WTC11 (cell line): ENCODE measurements at regions of chr3 and their contacts with region 1.

Region 1: DNA sequence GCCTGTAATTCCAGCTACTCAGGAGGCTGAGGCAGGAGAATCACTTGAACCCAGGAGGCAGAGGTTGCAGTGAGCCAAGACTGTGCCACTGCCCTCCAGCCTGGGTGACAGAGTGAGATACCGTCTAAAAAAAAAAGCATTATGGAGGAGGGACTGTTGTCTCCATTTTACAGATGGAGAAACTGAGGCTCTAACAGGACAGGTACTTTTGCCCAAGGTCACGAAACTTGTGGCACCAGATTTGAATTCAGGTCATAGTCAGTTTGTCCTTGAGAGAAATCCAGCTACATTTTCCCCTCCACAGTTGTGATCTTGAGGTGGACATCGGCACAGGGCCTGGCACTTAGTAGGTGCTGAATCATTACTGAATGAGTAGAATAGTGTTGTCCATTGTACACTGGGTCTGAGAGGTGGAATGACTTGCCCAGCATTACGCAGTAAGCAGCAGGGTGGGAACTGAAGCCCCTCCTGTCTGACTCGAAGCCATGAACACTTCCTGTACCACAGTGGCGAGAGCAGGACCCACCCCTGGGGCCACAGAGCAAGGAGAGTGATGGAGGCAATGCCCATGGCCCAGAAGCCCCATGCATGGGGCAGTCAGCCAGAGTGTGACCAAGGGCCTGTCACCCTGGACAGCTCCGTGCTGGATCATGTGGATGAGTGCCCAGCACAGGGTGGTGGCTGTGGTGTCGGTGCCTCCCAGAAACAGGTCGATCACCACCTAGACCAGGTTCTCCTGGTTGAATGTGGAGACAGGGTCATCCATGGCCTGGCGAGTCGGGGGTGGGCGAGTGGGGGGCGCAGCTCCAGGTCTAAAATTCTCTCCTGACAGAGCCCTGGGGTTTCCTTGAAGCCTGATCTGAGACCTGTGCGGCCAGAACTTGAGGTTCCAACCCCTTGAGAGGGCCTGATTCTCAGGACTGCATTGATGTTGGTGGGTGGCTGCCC is 20.4 kb upstream of the PARL start:
- DNase-seq: no peak
- ATAC-seq: no peak
- H3K4me3 Mint-ChIP-seq: no peak overlapping the region
- H3K27ac Mint-ChIP-seq: no peak overlapping the region
- H3K4me1 Mint-ChIP-seq: peaks cover 5% of the 10 kb centered on the region
- H3K27me3 Mint-ChIP-seq: peaks cover 4% of the 10 kb centered on the region
- CTCF ChIP-seq: no peak

Region 2: DNA sequence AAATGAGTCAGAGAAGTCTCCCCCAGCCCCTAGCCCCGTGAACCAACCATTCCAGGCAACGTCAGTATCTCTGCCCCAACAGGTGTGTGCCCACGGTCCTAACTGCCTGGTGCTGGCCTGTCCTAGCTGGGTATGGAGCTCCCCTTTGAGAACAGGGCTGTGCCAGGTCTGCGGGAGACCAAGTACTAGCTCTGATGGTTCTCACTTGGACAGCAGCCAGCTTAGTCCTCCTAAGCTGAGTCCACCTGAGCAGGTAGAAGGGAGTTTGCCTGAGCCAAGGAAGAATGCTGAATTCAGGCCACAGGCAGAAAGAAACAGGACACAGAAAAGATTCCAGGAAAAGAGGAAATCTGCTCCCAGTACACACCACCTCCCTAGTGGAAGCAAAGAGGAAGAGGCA is 12.7 kb after region 1 on chr3:
- CTCF ChIA-PET with region 1: interaction called, 22 read pairs
- POLR2A ChIA-PET with region 1: interaction called, 4 read pairs
- DNase-seq: no peak
- ATAC-seq: no peak
- H3K4me3 Mint-ChIP-seq: no peak overlapping the region
- H3K27ac Mint-ChIP-seq: no peak overlapping the region
- H3K4me1 Mint-ChIP-seq: peaks cover 5% of the 10 kb centered on the region; the same call in 1 of the 2 replicates
- H3K27me3 Mint-ChIP-seq: no peaks in the 10 kb centered on the region
- CTCF ChIP-seq: no peak

Region 3: DNA sequence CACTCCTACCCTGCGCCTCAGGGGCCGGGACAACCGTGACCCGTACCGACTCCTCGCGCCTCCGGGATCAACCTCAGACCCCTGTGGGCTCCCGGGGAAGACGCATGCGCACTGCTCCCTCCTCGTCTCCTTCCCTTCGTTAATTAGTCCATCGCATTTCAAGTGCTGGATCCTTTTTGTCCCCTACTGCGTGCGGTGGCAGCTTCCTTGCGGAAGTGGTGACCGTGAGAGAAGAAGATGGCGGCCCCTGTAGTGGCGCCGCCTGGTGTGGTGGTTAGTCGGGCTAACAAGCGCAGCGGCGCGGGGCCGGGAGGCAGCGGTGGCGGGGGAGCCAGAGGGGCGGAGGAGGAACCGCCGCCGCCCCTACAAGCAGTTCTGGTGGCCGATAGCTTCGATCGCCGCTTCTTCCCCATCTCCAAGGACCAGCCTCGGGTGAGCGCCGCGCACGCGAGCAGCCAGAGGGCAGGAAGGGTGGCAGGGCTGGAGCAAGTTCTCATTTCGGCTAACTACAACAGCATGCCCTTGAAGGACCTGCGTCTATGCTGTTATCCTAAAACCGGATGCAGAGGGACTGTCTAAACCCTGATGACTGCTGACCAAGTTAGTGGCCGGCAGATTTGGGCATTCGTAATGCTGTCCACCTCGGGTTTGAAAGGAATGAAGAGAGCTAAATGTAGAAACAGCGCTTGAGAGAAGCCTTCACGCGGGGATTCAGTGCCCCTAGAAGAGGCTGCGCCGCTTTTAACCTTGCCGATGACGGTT is 230.2 kb after region 1 on chr3 and contains the start of gene EIF2B5:
- CTCF ChIA-PET with region 1: interaction called, 10 read pairs
- POLR2A ChIA-PET with region 1: no interaction called
- DNase-seq: peak; percentile 89
- ATAC-seq: peak; percentile 81
- H3K4me3 Mint-ChIP-seq: peak within 1 kb of the TSS; percentile 94
- H3K27ac Mint-ChIP-seq: peak within 1 kb of the TSS; percentile 89
- H3K4me1 Mint-ChIP-seq: peaks cover 20% of the 10 kb centered on the region
- H3K27me3 Mint-ChIP-seq: no peaks in the 10 kb centered on the region
- CTCF ChIP-seq: no peak
- total RNA-seq, gene EIF2B5: 36.6 to 42.3 TPM (median 38.0 TPM) in 3 replicates